Endothelial cell of umbilical vein (primary cell): ENCODE measurements at regions of chr6 and their contacts with region 1.

Region 1: GRCh38 chr6:169789982-169790927 is 38.8 kb downstream of the ERMARD start:
- DNase-seq: peak; percentile 75
- H3K4me3 ChIP-seq: peak overlapping the region; percentile 14 to 33 (median 24)
- H3K27ac ChIP-seq: no peak overlapping the region
- H3K4me1 ChIP-seq: peaks cover 6% of the 10 kb centered on the region
- H3K27me3 ChIP-seq: peaks cover 0 to 4% of the 10 kb centered on the region in 2 experiments
- CTCF ChIP-seq: peak; percentile 97 to 99
- POLR2A ChIP-seq: no peak

Region 2: DNA sequence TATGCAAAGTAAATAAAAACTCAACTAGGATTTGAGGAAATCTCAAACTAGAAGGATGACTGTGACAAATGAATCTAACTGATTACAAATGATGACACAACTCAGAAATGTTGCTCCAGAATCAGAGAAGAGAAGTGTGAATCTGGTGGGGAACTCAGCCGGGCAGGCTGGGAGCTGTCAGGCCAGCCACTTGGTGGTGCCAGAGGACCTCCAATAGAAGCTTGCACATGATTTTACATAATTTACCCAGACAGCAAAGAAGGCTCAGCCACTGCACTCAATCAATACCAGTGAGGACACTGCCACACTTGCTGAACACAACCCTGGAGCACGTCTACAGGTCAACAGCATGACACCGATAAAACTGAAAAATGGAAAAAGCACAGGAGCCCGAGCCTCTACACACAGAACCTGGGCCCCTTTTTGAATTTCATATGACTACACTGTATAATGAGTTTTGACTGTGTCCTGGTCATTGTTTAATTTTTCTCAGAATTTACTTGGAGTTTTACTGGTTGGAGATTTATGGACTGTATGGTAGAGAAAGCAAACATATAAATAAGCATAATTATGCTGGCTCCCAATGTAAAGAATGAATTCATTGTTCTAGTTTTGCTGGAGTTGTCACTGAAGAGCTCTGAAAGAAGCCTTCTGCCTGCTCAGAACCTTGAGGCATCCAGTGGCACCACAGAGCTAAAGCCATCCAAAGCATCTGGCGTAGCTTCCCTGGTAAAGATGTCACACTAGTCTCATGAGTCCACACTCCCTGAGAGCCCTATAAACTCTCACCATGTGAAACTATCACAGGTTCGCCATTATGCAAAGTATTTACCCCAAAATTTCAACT is 833.1 kb before region 1 on chr6:
- CTCF ChIA-PET with region 1: interaction called, 4 read pairs
- POLR2A ChIA-PET with region 1: no interaction called
- dilution Hi-C with region 1: no loop called
- intact Hi-C with region 1: loop called (anchors 5 kb)
- DNase-seq: peak; percentile 17
- H3K4me3 ChIP-seq: no peak overlapping the region
- H3K27ac ChIP-seq: no peak overlapping the region
- H3K4me1 ChIP-seq: no peaks in the 10 kb centered on the region
- H3K27me3 ChIP-seq: no peaks in the 10 kb centered on the region
- CTCF ChIP-seq: peak; percentile 60 to 65
- POLR2A ChIP-seq: no peak

Region 3: GRCh38 chr6:169473663-169474062 is 316.6 kb before region 1 on chr6:
- CTCF ChIA-PET with region 1: no interaction called
- POLR2A ChIA-PET with region 1: no interaction called
- dilution Hi-C with region 1: no loop called
- intact Hi-C with region 1: no loop called
- DNase-seq: no peak
- H3K4me3 ChIP-seq: no peak overlapping the region
- H3K27ac ChIP-seq: no peak overlapping the region
- H3K4me1 ChIP-seq: no peaks in the 10 kb centered on the region
- H3K27me3 ChIP-seq: no peaks in the 10 kb centered on the region
- CTCF ChIP-seq: no peak
- POLR2A ChIP-seq: no peak

Region 4: GRCh38 chr6:170003027-170003426 is 212.8 kb after region 1 on chr6:
- CTCF ChIA-PET with region 1: interaction called, 4 read pairs
- POLR2A ChIA-PET with region 1: no interaction called
- dilution Hi-C with region 1: no loop called
- intact Hi-C with region 1: loop called (anchors 1 kb)
- DNase-seq: no peak
- H3K4me3 ChIP-seq: no peak overlapping the region
- H3K27ac ChIP-seq: no peak overlapping the region
- H3K4me1 ChIP-seq: no peaks in the 10 kb centered on the region
- H3K27me3 ChIP-seq: no peaks in the 10 kb centered on the region
- CTCF ChIP-seq: peak in 1 of 2 donors; percentile 39
- POLR2A ChIP-seq: no peak

Region 5: GRCh38 chr6:170134031-170134470 is 343.8 kb after region 1 on chr6:
- CTCF ChIA-PET with region 1: no interaction called
- POLR2A ChIA-PET with region 1: no interaction called
- dilution Hi-C with region 1: no loop called
- intact Hi-C with region 1: no loop called
- DNase-seq: no peak
- H3K4me3 ChIP-seq: no peak overlapping the region
- H3K27ac ChIP-seq: no peak overlapping the region
- H3K4me1 ChIP-seq: no peaks in the 10 kb centered on the region
- H3K27me3 ChIP-seq: no peaks in the 10 kb centered on the region
- CTCF ChIP-seq: no peak
- POLR2A ChIP-seq: no peak

Region 6: GRCh38 chr6:170522565-170523183 is 732.4 kb after region 1 on chr6:
- CTCF ChIA-PET with region 1: interaction called, 68 read pairs
- POLR2A ChIA-PET with region 1: no interaction called
- dilution Hi-C with region 1: no loop called
- intact Hi-C with region 1: loop called (anchors 1 kb)
- DNase-seq: peak; percentile 21
- H3K4me3 ChIP-seq: no peak overlapping the region
- H3K27ac ChIP-seq: no peak overlapping the region
- H3K4me1 ChIP-seq: peaks cover 5% of the 10 kb centered on the region
- H3K27me3 ChIP-seq: peaks cover 2 to 7% of the 10 kb centered on the region in 2 experiments
- CTCF ChIP-seq: peak; percentile 13 to 41
- POLR2A ChIP-seq: no peak